B cell (primary cell): ENCODE measurements at regions of chr2 and their contacts with region 1.

Region 1: GRCh38 chr2:9984217-9984739 is 32.8 kb downstream of the GRHL1 start:
- DNase-seq: peak; percentile 81
- ATAC-seq: peak; percentile 81
- H3K4me3 ChIP-seq: no peak overlapping the region
- H3K4me3 Mint-ChIP-seq: no peak overlapping the region
- H3K27ac ChIP-seq: no peak overlapping the region
- H3K27ac Mint-ChIP-seq: no peak overlapping the region
- H3K4me1 ChIP-seq: peaks cover 5 to 6% of the 10 kb centered on the region in 2 donors
- H3K4me1 Mint-ChIP-seq: peaks cover 4% of the 10 kb centered on the region
- H3K27me3 ChIP-seq: peaks cover 0 to 5% (median 0%) of the 10 kb centered on the region in 4 experiments
- H3K27me3 Mint-ChIP-seq: peaks cover 15% of the 10 kb centered on the region
- CTCF ChIP-seq: peak; percentile 87

Region 2: DNA sequence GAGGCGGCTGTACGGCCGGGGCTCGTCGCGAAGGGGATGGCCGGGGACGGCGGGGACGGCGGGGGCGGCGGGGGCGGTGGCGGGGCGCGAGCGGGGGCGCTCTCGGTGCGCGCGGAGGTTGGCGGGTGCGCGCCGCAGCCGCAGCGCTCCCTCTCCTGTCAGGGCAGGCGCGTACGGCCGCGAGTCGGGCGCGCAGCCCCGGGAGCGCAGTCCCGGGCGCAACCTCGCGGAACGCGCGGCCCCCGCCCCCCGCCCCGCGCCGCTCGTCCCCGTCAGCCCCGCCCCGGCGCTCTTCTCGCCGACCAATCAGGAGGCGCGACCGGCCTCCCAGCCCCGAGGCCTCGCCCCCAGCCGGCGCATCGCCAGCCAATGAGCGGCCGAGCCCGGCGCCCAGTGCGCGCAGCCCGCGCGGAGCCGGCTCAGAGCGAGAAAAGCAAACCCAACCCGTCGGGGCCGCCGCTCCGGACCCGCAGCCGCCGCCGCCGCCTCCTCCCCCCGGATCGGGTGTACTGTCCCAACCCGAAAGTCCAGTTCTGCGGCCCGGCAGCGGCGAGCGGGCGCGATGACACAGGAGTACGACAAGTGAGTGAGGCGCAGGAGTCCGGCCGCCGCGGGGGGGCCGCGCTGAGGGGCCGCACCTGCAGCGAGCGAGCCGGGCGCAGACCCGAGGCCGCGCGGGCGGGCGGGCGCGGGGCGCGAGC is 32.9 kb before region 1 on chr2 and contains the start of gene GRHL1:
- CTCF ChIA-PET with region 1: interaction called, 17 read pairs
- POLR2A ChIA-PET with region 1: no interaction called
- intact Hi-C with region 1: loop called (anchors 2 kb)
- DNase-seq: peak; percentile 94
- ATAC-seq: peak; percentile 96
- H3K4me3 ChIP-seq: peak within 1 kb of the TSS in 4 of 5 experiments; percentile 51 to 69 (median 62)
- H3K4me3 Mint-ChIP-seq: peak within 1 kb of the TSS; percentile 89
- H3K27ac ChIP-seq: peak within 1 kb of the TSS in 1 of 2 donors; percentile 45
- H3K27ac Mint-ChIP-seq: peak within 1 kb of the TSS; percentile 68
- H3K4me1 ChIP-seq: peaks cover 14 to 19% of the 10 kb centered on the region in 2 donors
- H3K4me1 Mint-ChIP-seq: peaks cover 14% of the 10 kb centered on the region
- H3K27me3 ChIP-seq: peaks cover 0 to 41% (median 20%) of the 10 kb centered on the region in 4 experiments
- H3K27me3 Mint-ChIP-seq: peaks cover 44% of the 10 kb centered on the region
- CTCF ChIP-seq: no peak
- total RNA-seq, gene GRHL1: 0.70 and 0.76 TPM in 2 replicates

Region 3: GRCh38 chr2:9967053-9967775 is 17.1 kb before region 1 on chr2:
- CTCF ChIA-PET with region 1: interaction called, 21 read pairs
- POLR2A ChIA-PET with region 1: no interaction called
- intact Hi-C with region 1: no loop called
- DNase-seq: peak; percentile 74
- ATAC-seq: peak; percentile 96
- H3K4me3 ChIP-seq: no peak overlapping the region
- H3K4me3 Mint-ChIP-seq: no peak overlapping the region
- H3K27ac ChIP-seq: no peak overlapping the region
- H3K27ac Mint-ChIP-seq: peak overlapping the region; percentile 39
- H3K4me1 ChIP-seq: peaks cover 8 to 11% of the 10 kb centered on the region in 2 donors
- H3K4me1 Mint-ChIP-seq: peaks cover 17% of the 10 kb centered on the region
- H3K27me3 ChIP-seq: peaks cover 0 to under 1% (median 0%) of the 10 kb centered on the region in 4 experiments
- H3K27me3 Mint-ChIP-seq: no peaks in the 10 kb centered on the region
- CTCF ChIP-seq: no peak

Region 4: DNA sequence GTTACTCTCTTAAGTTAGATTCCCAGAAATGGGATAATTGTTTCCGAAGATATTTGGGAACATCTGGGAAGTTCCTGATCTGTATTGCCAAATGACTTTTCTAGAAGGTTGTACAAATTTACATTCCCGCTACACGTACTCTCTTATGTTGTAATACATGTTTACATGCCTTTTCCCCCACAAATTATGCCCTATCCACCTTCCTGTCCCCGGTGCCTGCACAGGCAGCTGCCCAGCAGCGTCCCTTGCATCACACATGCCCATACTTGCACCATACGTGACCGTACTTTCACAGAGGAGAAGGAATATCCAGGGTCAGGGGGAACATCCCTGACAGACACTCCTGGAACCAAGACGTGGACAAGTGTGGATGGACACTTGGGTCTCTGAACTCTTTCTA is 34.9 kb after region 1 on chr2:
- CTCF ChIA-PET with region 1: interaction called, 15 read pairs
- POLR2A ChIA-PET with region 1: no interaction called
- intact Hi-C with region 1: no loop called
- DNase-seq: no peak
- ATAC-seq: no peak
- H3K4me3 ChIP-seq: no peak overlapping the region
- H3K4me3 Mint-ChIP-seq: no peak overlapping the region
- H3K27ac ChIP-seq: no peak overlapping the region
- H3K27ac Mint-ChIP-seq: no peak overlapping the region
- H3K4me1 ChIP-seq: no peaks in the 10 kb centered on the region
- H3K4me1 Mint-ChIP-seq: no peaks in the 10 kb centered on the region
- H3K27me3 ChIP-seq: no peaks in the 10 kb centered on the region
- H3K27me3 Mint-ChIP-seq: peaks cover 14% of the 10 kb centered on the region
- CTCF ChIP-seq: no peak

Region 5: DNA sequence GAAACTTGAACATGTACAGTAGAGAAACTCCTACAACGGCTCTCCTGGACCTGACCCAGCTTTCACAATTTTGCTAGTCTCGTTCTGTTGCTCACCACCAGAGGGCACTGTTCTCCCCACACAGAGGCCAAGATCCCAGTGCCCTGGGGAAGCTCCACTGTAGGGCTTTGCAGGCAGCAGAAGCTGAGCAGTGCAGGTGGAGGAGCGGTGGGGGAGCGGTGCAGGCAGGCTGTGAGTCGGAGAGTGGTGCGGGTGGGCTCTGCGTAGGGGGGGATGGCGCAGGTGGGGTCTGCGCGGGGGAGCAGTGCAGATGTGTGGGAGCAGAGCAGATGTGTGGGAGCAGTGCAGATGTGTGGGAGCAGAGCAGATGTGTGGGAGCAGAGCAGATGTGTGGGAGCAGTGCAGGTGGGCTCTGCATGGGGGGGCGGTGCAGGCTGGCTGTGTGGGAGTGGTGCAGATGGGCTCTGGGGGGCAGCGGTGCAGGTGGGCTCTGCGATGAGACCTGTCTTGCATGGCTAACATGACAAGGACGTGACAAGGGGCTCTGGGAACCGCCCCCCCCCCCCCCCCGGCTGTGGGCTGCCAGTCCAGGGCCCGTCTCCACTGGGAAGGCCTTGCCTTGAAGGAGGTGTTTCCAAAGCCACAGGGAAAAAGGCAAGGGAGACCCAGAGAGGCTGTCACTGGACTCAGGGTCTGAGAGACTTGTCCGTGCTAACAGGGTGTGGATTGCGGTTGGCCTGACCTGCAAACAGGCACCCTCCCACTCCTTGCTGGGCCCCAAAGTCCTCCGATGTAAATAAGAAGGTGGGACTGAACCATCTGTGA is 88.6 kb after region 1 on chr2:
- CTCF ChIA-PET with region 1: interaction called, 22 read pairs
- POLR2A ChIA-PET with region 1: no interaction called
- intact Hi-C with region 1: no loop called
- DNase-seq: peak; percentile 86
- ATAC-seq: peak; percentile 95
- H3K4me3 ChIP-seq: no peak overlapping the region
- H3K4me3 Mint-ChIP-seq: no peak overlapping the region
- H3K27ac ChIP-seq: no peak overlapping the region
- H3K27ac Mint-ChIP-seq: no peak overlapping the region
- H3K4me1 ChIP-seq: peaks cover 3 to 6% of the 10 kb centered on the region in 2 donors
- H3K4me1 Mint-ChIP-seq: peaks cover 4% of the 10 kb centered on the region
- H3K27me3 ChIP-seq: peaks cover 0 to 36% (median 22%) of the 10 kb centered on the region in 4 experiments
- H3K27me3 Mint-ChIP-seq: peaks cover 43% of the 10 kb centered on the region
- CTCF ChIP-seq: peak; percentile 81

Region 6: GRCh38 chr2:10668402-10669012 is 684.2 kb after region 1 on chr2:
- CTCF ChIA-PET with region 1: interaction called, 3 read pairs
- POLR2A ChIA-PET with region 1: no interaction called
- intact Hi-C with region 1: loop called (anchors 5 kb)
- DNase-seq: peak; percentile 77
- ATAC-seq: peak; percentile 56
- H3K4me3 ChIP-seq: no peak overlapping the region
- H3K4me3 Mint-ChIP-seq: no peak overlapping the region
- H3K27ac ChIP-seq: no peak overlapping the region
- H3K27ac Mint-ChIP-seq: no peak overlapping the region
- H3K4me1 ChIP-seq: no peaks in the 10 kb centered on the region
- H3K4me1 Mint-ChIP-seq: no peaks in the 10 kb centered on the region
- H3K27me3 ChIP-seq: no peaks in the 10 kb centered on the region
- H3K27me3 Mint-ChIP-seq: no peaks in the 10 kb centered on the region
- CTCF ChIP-seq: peak; percentile 97